Panc1 (cell line): ENCODE measurements at regions of chr3 and their contacts with region 1.

Region 1: DNA sequence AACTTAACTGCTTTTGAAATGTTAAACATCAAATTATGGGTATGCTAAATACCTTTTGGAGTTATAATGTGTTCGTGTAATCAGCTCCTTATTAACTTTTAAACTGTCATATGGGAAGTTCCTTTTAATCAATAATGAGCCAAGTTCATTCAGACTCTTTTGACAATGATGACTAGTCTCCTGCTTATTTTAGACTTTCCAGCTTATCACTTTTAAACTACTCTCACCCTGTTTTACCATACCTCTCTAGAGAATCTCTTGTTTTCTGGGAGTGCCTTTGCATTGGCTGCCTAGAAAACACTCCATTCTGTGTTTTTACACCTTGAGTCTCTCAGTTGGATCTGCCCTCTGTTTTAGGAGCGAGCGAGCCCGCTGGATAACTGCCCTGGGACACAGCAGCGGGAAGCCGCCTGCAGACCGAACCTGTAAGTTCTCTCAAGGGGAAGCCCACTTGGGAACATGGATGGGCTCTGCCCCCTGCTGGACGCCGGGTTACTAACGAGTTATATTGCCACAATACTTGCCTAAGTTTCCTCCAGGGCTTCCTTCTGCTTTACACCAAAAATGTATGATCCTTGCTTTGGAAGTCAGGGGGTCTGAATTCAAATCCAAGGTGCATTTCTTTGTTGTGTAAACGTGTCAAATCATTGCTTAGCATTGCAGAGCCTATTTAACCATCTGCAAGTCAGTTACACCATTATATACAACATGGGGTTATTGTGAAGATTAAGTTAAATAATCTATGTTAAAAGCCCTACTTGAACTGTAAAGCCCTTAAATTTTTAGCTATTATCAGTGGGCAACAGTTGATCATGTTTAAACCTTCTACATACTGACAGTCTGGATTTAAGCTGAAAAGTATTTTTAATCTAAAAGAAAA is 71.3 kb downstream of the DHX36 start:
- DNase-seq: peak; percentile 55
- ATAC-seq: peak; percentile 96
- H3K4me3 ChIP-seq: no peak overlapping the region
- H3K27ac ChIP-seq: no peak overlapping the region
- H3K4me1 ChIP-seq: no peaks in the 10 kb centered on the region
- H3K27me3 ChIP-seq: no peaks in the 10 kb centered on the region
- CTCF ChIP-seq: peak; percentile 90

Region 2: GRCh38 chr3:153768561-153769469 is 484.2 kb before region 1 on chr3:
- CTCF ChIA-PET with region 1: no interaction called
- POLR2A ChIA-PET with region 1: no interaction called
- in situ Hi-C with region 1: no loop called
- intact Hi-C with region 1: no loop called
- DNase-seq: peak; percentile 39
- ATAC-seq: peak; percentile 93
- H3K4me3 ChIP-seq: no peak overlapping the region
- H3K27ac ChIP-seq: no peak overlapping the region
- H3K4me1 ChIP-seq: no peaks in the 10 kb centered on the region
- H3K27me3 ChIP-seq: no peaks in the 10 kb centered on the region
- CTCF ChIP-seq: peak; percentile 91

Region 3: GRCh38 chr3:154040286-154040685 is 212.7 kb before region 1 on chr3:
- CTCF ChIA-PET with region 1: no interaction called
- POLR2A ChIA-PET with region 1: interaction called, 3 read pairs
- in situ Hi-C with region 1: no loop called
- intact Hi-C with region 1: loop called (anchors 5 kb)
- DNase-seq: no peak
- ATAC-seq: peak; percentile 77
- H3K4me3 ChIP-seq: no peak overlapping the region
- H3K27ac ChIP-seq: no peak overlapping the region
- H3K4me1 ChIP-seq: no peaks in the 10 kb centered on the region
- H3K27me3 ChIP-seq: no peaks in the 10 kb centered on the region
- CTCF ChIP-seq: peak; percentile 50; the same call in 1 of the 2 replicates

Region 4: GRCh38 chr3:154095832-154096421 is 157.1 kb before region 1 on chr3:
- CTCF ChIA-PET with region 1: no interaction called
- POLR2A ChIA-PET with region 1: no interaction called
- in situ Hi-C with region 1: no loop called
- intact Hi-C with region 1: loop called (anchors 5 kb)
- DNase-seq: no peak
- ATAC-seq: no peak
- H3K4me3 ChIP-seq: no peak overlapping the region
- H3K27ac ChIP-seq: no peak overlapping the region
- H3K4me1 ChIP-seq: no peaks in the 10 kb centered on the region
- H3K27me3 ChIP-seq: no peaks in the 10 kb centered on the region
- CTCF ChIP-seq: peak; percentile 64; the same call in 1 of the 2 replicates

Region 5: DNA sequence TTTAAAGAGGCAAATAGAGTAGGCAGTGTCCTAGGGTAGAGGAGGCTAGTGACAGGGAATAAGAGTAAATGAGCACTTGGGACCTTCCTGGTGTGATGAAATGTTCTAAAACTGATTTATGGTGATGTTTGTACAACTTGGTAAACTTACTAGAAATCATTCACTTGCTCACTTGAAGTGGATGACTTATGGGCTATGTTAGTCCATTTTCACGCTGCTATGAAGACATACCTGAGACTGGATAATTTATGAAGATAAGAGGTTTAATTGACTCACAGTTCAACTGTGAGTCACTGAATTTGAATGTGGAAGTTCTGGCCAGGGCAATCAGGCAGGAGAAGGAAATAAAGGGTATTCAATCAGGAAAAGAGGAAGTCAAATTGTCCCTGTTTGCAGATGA is 103.0 kb after region 1 on chr3:
- CTCF ChIA-PET with region 1: no interaction called
- POLR2A ChIA-PET with region 1: no interaction called
- in situ Hi-C with region 1: no loop called
- intact Hi-C with region 1: no loop called
- DNase-seq: no peak
- ATAC-seq: no peak
- H3K4me3 ChIP-seq: no peak overlapping the region
- H3K27ac ChIP-seq: no peak overlapping the region
- H3K4me1 ChIP-seq: no peaks in the 10 kb centered on the region
- H3K27me3 ChIP-seq: no peaks in the 10 kb centered on the region
- CTCF ChIP-seq: no peak